HEK293 (cell line): ENCODE measurements at regions of chr2 and their contacts with region 1.

Region 1: GRCh38 chr2:240060977-240061591 is 7.8 kb upstream of the OR6B3 start:
- H3K4me3 ChIP-seq: no peak overlapping the region
- H3K27ac ChIP-seq: no peak overlapping the region
- H3K4me1 ChIP-seq: no peaks in the 10 kb centered on the region
- CTCF ChIP-seq: peak; percentile 52; the same call in 1 of the 2 replicates

Region 2: GRCh38 chr2:240143801-240144648 is 82.9 kb after region 1 on chr2:
- CTCF ChIA-PET with region 1: interaction called, 123 read pairs
- POLR2A ChIA-PET with region 1: no interaction called
- H3K4me3 ChIP-seq: no peak overlapping the region
- H3K27ac ChIP-seq: no peak overlapping the region
- H3K4me1 ChIP-seq: no peaks in the 10 kb centered on the region
- CTCF ChIP-seq: peak; percentile 89; the same call in 1 of the 2 replicates